ENCODE measurements at regions of chr2 and their contacts with region 1.

Region 1: DNA sequence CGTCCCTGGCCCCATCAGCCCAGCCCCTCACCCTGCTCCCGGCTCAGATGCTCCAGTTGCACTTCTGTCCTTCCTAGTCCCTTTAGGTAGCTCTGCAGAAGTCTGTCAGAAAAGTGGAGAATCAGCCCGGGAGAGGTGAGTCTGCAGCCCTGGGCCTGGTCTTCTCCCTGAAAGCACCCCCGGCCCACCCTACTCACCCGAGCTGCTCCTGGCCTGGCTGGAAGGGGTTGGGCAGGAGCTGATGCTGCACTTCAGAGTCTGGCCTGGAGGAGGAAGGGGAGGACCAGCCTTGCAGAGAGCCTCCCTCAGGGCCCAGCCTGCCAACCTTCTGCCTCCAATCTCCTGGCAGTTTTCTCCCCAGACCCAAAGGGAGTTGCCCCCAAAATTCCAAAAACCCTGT is 15.8 kb downstream of the KHK start:
- DNase-seq: no peak
- H3K4me3 ChIP-seq: no peak overlapping the region
- H3K4me1 ChIP-seq: no peaks in the 10 kb centered on the region
- H3K27me3 ChIP-seq: no peaks in the 10 kb centered on the region

Region 2: GRCh38 chr2:27281855-27282559 is 179.7 kb after region 1 on chr2 and contains the start of gene TRIM54:
- in situ Hi-C with region 1: loop called (anchors 10 kb)
- DNase-seq: peak; percentile 84 to 94
- H3K4me3 ChIP-seq: peak within 1 kb of the TSS; percentile 20
- H3K4me1 ChIP-seq: peaks cover 58% of the 10 kb centered on the region
- H3K27me3 ChIP-seq: no peaks in the 10 kb centered on the region

Region 3: GRCh38 chr2:27370026-27370815 is 267.9 kb after region 1 on chr2 and contains the starts of genes EIF2B4 and SNX17:
- in situ Hi-C with region 1: no loop called
- DNase-seq: peak; percentile 97 to 99
- H3K4me3 ChIP-seq: peak within 1 kb of the TSS; percentile 98
- H3K4me1 ChIP-seq: peaks cover 10% of the 10 kb centered on the region
- H3K27me3 ChIP-seq: no peaks in the 10 kb centered on the region

Measured in HAP-1 (cell line).